GM18951 (cell line): ENCODE measurements at regions of chr4 and their contacts with region 1.

Region 1: GRCh38 chr4:174873931-174874330 is 44.2 kb upstream of the ADAM29 start:
- POLR2A ChIP-seq: no peak

Region 2: DNA sequence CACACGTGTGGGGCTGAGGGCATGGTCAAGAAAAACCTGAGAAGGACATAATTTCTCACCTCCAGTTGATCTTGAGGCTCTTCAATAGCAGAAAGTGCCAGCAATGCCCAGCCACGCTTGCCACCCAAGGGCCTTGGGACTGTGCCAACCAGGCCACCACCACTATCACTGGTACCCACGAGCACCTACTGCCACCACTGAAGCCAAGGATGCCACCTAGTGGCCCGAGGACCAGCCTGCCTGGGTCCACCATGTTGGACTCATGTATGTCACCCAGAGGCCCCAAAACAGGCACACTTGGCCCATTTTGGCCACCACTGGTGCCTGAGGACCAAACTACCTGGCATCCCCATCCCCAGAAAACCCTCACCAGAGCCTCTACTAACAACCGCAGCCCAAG is 236.0 kb after region 1 on chr4:
- in situ Hi-C with region 1: loop called (anchors 25 kb)
- POLR2A ChIP-seq: no peak